Activated CD4-positive, alpha-beta T cell treated with anti-CD3 and anti-CD28 coated beads for 36 hours (primary cell): ENCODE measurements at regions of chr14 and their contacts with region 1.

Region 1: GRCh38 chr14:103546652-103547454 is 15.6 kb downstream of the BAG5 start:
- DNase-seq: peak; percentile 85
- ATAC-seq: peak; percentile 85
- H3K4me3 Mint-ChIP-seq: no peak overlapping the region
- H3K27ac Mint-ChIP-seq: no peak overlapping the region
- H3K4me1 Mint-ChIP-seq: no peaks in the 10 kb centered on the region
- H3K27me3 Mint-ChIP-seq: no peaks in the 10 kb centered on the region

Region 2: DNA sequence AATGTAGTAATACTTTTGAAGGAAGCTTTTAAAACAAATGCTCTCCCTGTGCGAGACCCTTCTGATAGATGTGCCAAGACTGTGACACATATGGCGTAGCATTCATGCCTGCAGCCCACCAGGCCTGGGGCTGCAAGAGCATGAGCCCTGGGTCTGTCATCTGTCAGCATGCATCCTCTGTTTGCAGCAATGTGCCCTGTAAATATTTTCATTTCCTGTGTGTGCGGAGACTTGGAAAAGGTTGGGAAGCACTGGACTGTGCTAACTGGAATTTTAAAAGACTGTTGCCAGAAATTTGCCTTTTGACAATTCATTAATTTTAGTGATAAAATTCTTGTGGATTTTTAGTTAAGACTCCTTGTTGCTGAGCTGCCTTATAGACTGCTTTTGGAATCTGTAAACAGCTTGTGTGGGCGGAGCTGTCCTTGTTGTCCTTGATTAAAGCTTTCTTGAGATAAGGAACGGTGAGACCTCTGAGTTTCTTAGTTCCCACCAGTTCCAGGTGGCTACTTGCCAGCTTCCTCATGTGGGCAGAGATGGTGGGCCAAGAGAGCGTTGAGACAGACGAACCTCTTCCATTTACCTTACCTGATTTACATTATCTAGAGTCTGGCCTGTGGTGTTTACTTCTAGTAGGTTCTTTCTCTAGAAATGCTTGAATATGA is 138.2 kb before region 1 on chr14:
- CTCF ChIA-PET with region 1: no interaction called
- POLR2A ChIA-PET with region 1: no interaction called
- intact Hi-C with region 1: no loop called
- DNase-seq: no peak
- ATAC-seq: no peak
- H3K4me3 Mint-ChIP-seq: no peak overlapping the region
- H3K27ac Mint-ChIP-seq: no peak overlapping the region
- H3K4me1 Mint-ChIP-seq: peaks cover 11% of the 10 kb centered on the region
- H3K27me3 Mint-ChIP-seq: no peaks in the 10 kb centered on the region

Region 3: GRCh38 chr14:103500148-103500990 is 46.5 kb before region 1 on chr14:
- CTCF ChIA-PET with region 1: interaction called, 3 read pairs
- POLR2A ChIA-PET with region 1: no interaction called
- intact Hi-C with region 1: loop called (anchors 1 kb)
- DNase-seq: peak; percentile 91
- ATAC-seq: peak; percentile 87
- H3K4me3 Mint-ChIP-seq: no peak overlapping the region
- H3K27ac Mint-ChIP-seq: peak overlapping the region; percentile 55
- H3K4me1 Mint-ChIP-seq: peaks cover 19% of the 10 kb centered on the region
- H3K27me3 Mint-ChIP-seq: no peaks in the 10 kb centered on the region